ENCODE measurements at regions of chr17 and their contacts with region 1.

Region 1: DNA sequence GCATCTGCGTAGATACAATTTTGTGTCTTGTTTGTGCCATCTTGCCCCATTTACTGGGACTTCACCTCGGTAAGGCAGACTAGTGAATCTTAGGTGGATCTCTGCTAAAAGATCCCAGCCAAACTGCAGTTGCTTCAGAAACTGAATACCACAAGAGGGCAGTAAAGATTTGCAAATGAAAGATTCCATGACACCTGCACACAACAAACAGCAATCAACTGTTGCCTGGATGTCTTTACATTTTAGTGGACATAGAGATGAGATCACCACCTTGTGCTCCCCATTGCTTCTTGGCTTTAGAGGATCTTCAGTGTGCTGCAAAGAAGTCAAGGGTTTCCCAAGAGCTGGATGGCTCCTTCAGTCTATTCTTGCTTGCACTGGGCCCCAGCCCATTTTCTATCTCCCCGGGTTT is 119.2 kb upstream of the CACNG5 start:
- DNase-seq: no peak
- ATAC-seq: no peak
- H3K4me3 ChIP-seq: no peak overlapping the region
- H3K27ac ChIP-seq: no peak overlapping the region
- H3K4me1 ChIP-seq: no peaks in the 10 kb centered on the region
- H3K27me3 ChIP-seq: no peaks in the 10 kb centered on the region

Region 2: GRCh38 chr17:66777689-66778225 is 62.0 kb after region 1 on chr17:
- intact Hi-C with region 1: loop called in 1 of 2 experiments (anchors 10 kb)
- DNase-seq: no peak
- ATAC-seq: no peak
- H3K4me3 ChIP-seq: no peak overlapping the region
- H3K27ac ChIP-seq: no peak overlapping the region
- H3K4me1 ChIP-seq: no peaks in the 10 kb centered on the region
- H3K27me3 ChIP-seq: no peaks in the 10 kb centered on the region

Region 3: GRCh38 chr17:66906321-66907278 is 190.8 kb after region 1 on chr17:
- intact Hi-C with region 1: loop called (anchors 2 to 5 kb)
- DNase-seq: peak; percentile 82 to 87
- ATAC-seq: peak; percentile 69
- H3K4me3 ChIP-seq: no peak overlapping the region
- H3K27ac ChIP-seq: no peak overlapping the region
- H3K4me1 ChIP-seq: no peaks in the 10 kb centered on the region
- H3K27me3 ChIP-seq: no peaks in the 10 kb centered on the region

Region 4: GRCh38 chr17:67293251-67294203 is 577.8 kb after region 1 on chr17:
- intact Hi-C with region 1: loop called in 1 of 2 experiments (anchors 5 kb)
- DNase-seq: peak; percentile 80 to 83
- ATAC-seq: peak; percentile 62
- H3K4me3 ChIP-seq: no peak overlapping the region
- H3K27ac ChIP-seq: no peak overlapping the region
- H3K4me1 ChIP-seq: no peaks in the 10 kb centered on the region
- H3K27me3 ChIP-seq: no peaks in the 10 kb centered on the region